ENCODE measurements at regions of chr12 and their contacts with region 1.

Region 1: GRCh38 chr12:82627569-82628198 is 59.0 kb upstream of the TMTC2 start:
- DNase-seq: no peak
- H3K4me3 Mint-ChIP-seq: no peak overlapping the region
- H3K27ac Mint-ChIP-seq: no peak overlapping the region
- H3K4me1 Mint-ChIP-seq: no peaks in the 10 kb centered on the region
- H3K27me3 Mint-ChIP-seq: peaks cover 12% of the 10 kb centered on the region

Region 2: GRCh38 chr12:82527165-82527780 is 100.4 kb before region 1 on chr12:
- CTCF ChIA-PET with region 1: no interaction called
- intact Hi-C with region 1: loop called (anchors 5 kb)
- DNase-seq: peak; percentile 20
- H3K4me3 Mint-ChIP-seq: no peak overlapping the region
- H3K27ac Mint-ChIP-seq: no peak overlapping the region
- H3K4me1 Mint-ChIP-seq: no peaks in the 10 kb centered on the region
- H3K27me3 Mint-ChIP-seq: peaks cover 3% of the 10 kb centered on the region

Measured in activated naive CD4-positive, alpha-beta T cell treated with anti-CD3 and anti-CD28 coated beads for 36 hours (primary cell).